ENCODE measurements at regions of chr3 and their contacts with region 1.

Region 1: DNA sequence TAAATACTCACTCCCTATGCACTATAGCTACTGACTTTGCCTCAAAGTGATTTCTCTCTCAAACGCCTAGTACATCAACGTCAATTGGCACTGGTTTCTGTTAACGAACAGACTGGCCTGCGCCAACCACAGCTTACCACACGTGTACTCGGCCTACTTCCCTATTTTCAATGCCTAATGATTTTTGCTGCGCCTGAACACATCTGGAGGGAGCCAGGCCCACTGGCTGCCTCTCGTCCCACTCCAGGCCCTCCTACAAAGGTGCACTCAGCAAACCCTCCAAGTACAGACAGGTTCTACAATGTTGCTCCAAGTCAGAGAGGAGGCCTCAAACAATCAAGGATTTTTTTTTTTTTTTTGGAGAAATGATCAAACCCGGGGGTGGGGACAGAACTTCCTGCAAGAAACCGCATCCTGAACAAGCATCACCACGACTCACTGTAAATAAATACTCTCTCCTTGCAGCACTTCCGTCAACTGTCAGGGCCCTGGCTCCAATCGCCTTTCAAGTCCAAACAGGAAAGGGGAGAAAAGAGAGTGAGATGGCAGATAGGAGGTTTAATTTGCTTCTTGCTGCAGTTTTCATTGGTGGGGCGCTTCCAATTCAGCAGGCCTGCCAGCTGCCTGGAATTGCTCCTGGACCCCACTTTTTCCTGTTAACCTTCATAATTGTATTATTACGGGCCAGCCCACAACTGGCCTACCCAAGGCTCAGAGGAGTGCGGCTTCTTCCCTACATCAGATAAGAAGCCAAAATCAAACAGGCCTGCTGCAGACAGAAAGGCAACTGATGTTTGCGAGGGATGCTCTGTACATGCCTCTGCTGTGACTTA is 139.3 kb downstream of the FOXP1 start:
- DNase-seq: peak; percentile 89 to 95 (median 93)
- H3K4me3 ChIP-seq: peak overlapping the region; percentile 37 to 42
- H3K4me3 Mint-ChIP-seq: peak overlapping the region; percentile 27 to 92 (median 83)
- H3K27ac ChIP-seq: peak overlapping the region; percentile 67
- H3K27ac Mint-ChIP-seq: peak overlapping the region; percentile 96 to 100 (median 98)
- H3K4me1 ChIP-seq: peaks cover 100% of the 10 kb centered on the region
- H3K4me1 Mint-ChIP-seq: peaks cover 76 to 100% (median 91%) of the 10 kb centered on the region in 4 donors
- H3K27me3 ChIP-seq: no peaks in the 10 kb centered on the region
- H3K27me3 Mint-ChIP-seq: no peaks in the 10 kb centered on the region

Region 2: GRCh38 chr3:70926835-70927234 is 517.4 kb before region 1 on chr3:
- CTCF ChIA-PET with region 1: no interaction called
- POLR2A ChIA-PET with region 1: no interaction called
- intact Hi-C with region 1: no loop called
- DNase-seq: no peak
- H3K4me3 ChIP-seq: no peak overlapping the region
- H3K4me3 Mint-ChIP-seq: no peak overlapping the region
- H3K27ac ChIP-seq: no peak overlapping the region
- H3K27ac Mint-ChIP-seq: no peak overlapping the region
- H3K4me1 ChIP-seq: no peaks in the 10 kb centered on the region
- H3K4me1 Mint-ChIP-seq: no peaks in the 10 kb centered on the region
- H3K27me3 ChIP-seq: no peaks in the 10 kb centered on the region
- H3K27me3 Mint-ChIP-seq: peaks cover 0 to 2% of the 10 kb centered on the region in 2 donors

Region 3: GRCh38 chr3:71372911-71373637 is 71.2 kb before region 1 on chr3:
- CTCF ChIA-PET with region 1: no interaction called
- POLR2A ChIA-PET with region 1: interaction called, 3 read pairs
- intact Hi-C with region 1: loop called (anchors 1 kb)
- DNase-seq: peak; percentile 46 to 81 (median 76)
- H3K4me3 ChIP-seq: no peak overlapping the region
- H3K4me3 Mint-ChIP-seq: peak overlapping the region; percentile 2 to 80 (median 50)
- H3K27ac ChIP-seq: peak overlapping the region; percentile 45
- H3K27ac Mint-ChIP-seq: peak overlapping the region; percentile 79 to 99 (median 96)
- H3K4me1 ChIP-seq: peaks cover 43% of the 10 kb centered on the region
- H3K4me1 Mint-ChIP-seq: peaks cover 43 to 80% (median 55%) of the 10 kb centered on the region in 4 donors
- H3K27me3 ChIP-seq: no peaks in the 10 kb centered on the region
- H3K27me3 Mint-ChIP-seq: no peaks in the 10 kb centered on the region

Region 4: GRCh38 chr3:71416876-71417275 is 27.4 kb before region 1 on chr3:
- CTCF ChIA-PET with region 1: interaction called, 4 read pairs
- POLR2A ChIA-PET with region 1: interaction called, 46 read pairs
- intact Hi-C with region 1: loop called (anchors 2 kb)
- DNase-seq: peak; percentile 33 to 55 (median 49)
- H3K4me3 ChIP-seq: no peak overlapping the region
- H3K4me3 Mint-ChIP-seq: peak overlapping the region in 7 of 8 donors; percentile 30 to 83 (median 63)
- H3K27ac ChIP-seq: no peak overlapping the region
- H3K27ac Mint-ChIP-seq: peak overlapping the region; percentile 75 to 95 (median 85)
- H3K4me1 ChIP-seq: peaks cover 77% of the 10 kb centered on the region
- H3K4me1 Mint-ChIP-seq: peaks cover 55 to 93% (median 74%) of the 10 kb centered on the region in 4 donors
- H3K27me3 ChIP-seq: no peaks in the 10 kb centered on the region
- H3K27me3 Mint-ChIP-seq: no peaks in the 10 kb centered on the region

Region 5: GRCh38 chr3:71456156-71456555 is 11.9 kb after region 1 on chr3:
- CTCF ChIA-PET with region 1: interaction called, 23 read pairs
- POLR2A ChIA-PET with region 1: interaction called, 102 read pairs
- intact Hi-C with region 1: loop called (anchors 1 kb)
- DNase-seq: peak in 4 of 5 donors; percentile 40 to 47 (median 44)
- H3K4me3 ChIP-seq: peak overlapping the region; percentile 15 to 30
- H3K4me3 Mint-ChIP-seq: peak overlapping the region; percentile 59 to 91 (median 84)
- H3K27ac ChIP-seq: peak overlapping the region; percentile 67
- H3K27ac Mint-ChIP-seq: peak overlapping the region; percentile 93 to 98 (median 96)
- H3K4me1 ChIP-seq: peaks cover 89% of the 10 kb centered on the region
- H3K4me1 Mint-ChIP-seq: peaks cover 80 to 98% (median 86%) of the 10 kb centered on the region in 4 donors
- H3K27me3 ChIP-seq: no peaks in the 10 kb centered on the region
- H3K27me3 Mint-ChIP-seq: no peaks in the 10 kb centered on the region

Region 6: GRCh38 chr3:71495708-71496472 is 51.6 kb after region 1 on chr3:
- CTCF ChIA-PET with region 1: interaction called, 9 read pairs
- POLR2A ChIA-PET with region 1: interaction called, 85 read pairs
- intact Hi-C with region 1: loop called (anchors 1 kb)
- DNase-seq: peak in 3 of 5 donors; percentile 27 to 64 (median 39)
- H3K4me3 ChIP-seq: peak overlapping the region; percentile 1 to 26
- H3K4me3 Mint-ChIP-seq: peak overlapping the region; percentile 72 to 89 (median 85)
- H3K27ac ChIP-seq: peak overlapping the region; percentile 50
- H3K27ac Mint-ChIP-seq: peak overlapping the region; percentile 88 to 98 (median 94)
- H3K4me1 ChIP-seq: peaks cover 82% of the 10 kb centered on the region
- H3K4me1 Mint-ChIP-seq: peaks cover 61 to 90% (median 72%) of the 10 kb centered on the region in 4 donors
- H3K27me3 ChIP-seq: no peaks in the 10 kb centered on the region
- H3K27me3 Mint-ChIP-seq: no peaks in the 10 kb centered on the region